ENCODE measurements at regions of chr6 and their contacts with region 1.

Region 1: GRCh38 chr6:129598244-129599187 is 111.5 kb downstream of the ARHGAP18 start:
- DNase-seq: peak; percentile 72
- ATAC-seq: peak; percentile 83
- H3K4me3 ChIP-seq: no peak overlapping the region
- H3K27ac ChIP-seq: peak overlapping the region; percentile 58; the same call in 1 of the 2 replicates
- H3K4me1 ChIP-seq: peaks cover 25 to 26% of the 10 kb centered on the region in 2 experiments
- H3K27me3 ChIP-seq: no peaks in the 10 kb centered on the region
- CTCF ChIP-seq: peak; percentile 52 to 83 (median 81)
- POLR2A ChIP-seq: no peak
- RAD21 ChIP-seq: peak; percentile 92

Region 2: DNA sequence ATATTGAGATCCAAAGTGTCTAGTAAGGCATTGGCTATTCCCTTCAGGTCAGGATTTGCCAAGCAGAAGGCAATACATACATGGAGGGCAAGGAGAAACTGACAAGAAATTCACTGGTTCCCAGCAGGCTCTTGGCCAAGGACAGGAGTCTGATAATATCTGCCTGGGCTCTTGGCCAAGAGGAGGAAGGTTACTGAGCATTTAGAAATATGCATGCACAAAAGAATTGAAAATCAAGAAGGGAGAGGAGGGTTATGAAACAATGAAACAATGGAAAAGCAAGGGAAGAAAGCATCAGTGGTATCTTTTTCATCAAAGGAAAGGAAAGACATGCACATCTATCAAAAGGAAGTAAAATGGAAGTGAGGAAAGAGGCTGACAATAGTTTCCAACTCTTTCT is 69.1 kb after region 1 on chr6:
- CTCF ChIA-PET with region 1: interaction called, 4 read pairs
- POLR2A ChIA-PET with region 1: interaction called, 4 read pairs
- RAD21 ChIA-PET with region 1: interaction called in 1 of 2 experiments, 3 read pairs
- intact Hi-C with region 1: loop called (anchors 2 kb)
- DNase-seq: no peak
- ATAC-seq: no peak
- H3K4me3 ChIP-seq: no peak overlapping the region
- H3K27ac ChIP-seq: peak overlapping the region; percentile 87
- H3K4me1 ChIP-seq: peaks cover 84 to 94% of the 10 kb centered on the region in 2 experiments
- H3K27me3 ChIP-seq: no peaks in the 10 kb centered on the region
- CTCF ChIP-seq: no peak
- POLR2A ChIP-seq: no peak
- RAD21 ChIP-seq: no peak

Region 3: DNA sequence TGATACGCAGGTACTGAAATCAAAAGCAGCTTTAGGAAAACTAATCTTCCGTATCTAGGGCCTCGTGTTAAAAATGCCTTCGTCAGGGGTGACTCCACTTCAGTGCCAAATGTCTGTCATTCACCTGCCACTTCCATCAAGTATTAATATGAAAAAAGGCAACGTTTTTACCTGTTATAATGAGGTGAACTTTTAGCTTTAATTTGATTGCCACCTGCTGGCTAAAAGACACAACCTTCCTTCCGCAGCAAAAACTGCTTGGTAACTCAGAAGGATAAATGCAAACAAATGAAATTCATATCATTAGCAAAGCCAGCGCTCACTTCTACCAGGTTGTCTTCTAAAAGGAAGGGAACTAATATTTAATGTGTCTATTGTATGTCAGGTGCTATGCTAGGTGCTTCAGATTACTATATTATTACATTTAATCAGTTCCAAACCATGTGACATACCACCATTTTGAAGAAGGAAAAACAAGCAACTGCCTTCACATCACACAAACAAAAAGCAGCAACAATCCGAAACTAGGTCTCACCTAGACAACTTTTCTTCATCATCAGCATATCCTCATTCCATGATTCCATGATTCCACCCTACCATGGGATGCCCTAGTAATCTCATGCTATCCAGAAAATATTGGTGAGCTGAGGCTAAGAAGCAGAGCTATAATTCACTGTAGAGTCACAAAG is 132.1 kb after region 1 on chr6:
- CTCF ChIA-PET with region 1: interaction called, 42 read pairs
- POLR2A ChIA-PET with region 1: no interaction called
- RAD21 ChIA-PET with region 1: interaction called, 7 to 11 read pairs
- intact Hi-C with region 1: loop called (anchors 1 kb)
- DNase-seq: no peak
- ATAC-seq: peak; percentile 62
- H3K4me3 ChIP-seq: no peak overlapping the region
- H3K27ac ChIP-seq: peak overlapping the region; percentile 52
- H3K4me1 ChIP-seq: peaks cover 27 to 38% of the 10 kb centered on the region in 2 experiments
- H3K27me3 ChIP-seq: no peaks in the 10 kb centered on the region
- CTCF ChIP-seq: peak; percentile 60 to 85 (median 71)
- POLR2A ChIP-seq: no peak
- RAD21 ChIP-seq: peak; percentile 96

Region 4: GRCh38 chr6:129774697-129775447 is 176.4 kb after region 1 on chr6:
- CTCF ChIA-PET with region 1: interaction called, 5 read pairs
- POLR2A ChIA-PET with region 1: no interaction called
- RAD21 ChIA-PET with region 1: no interaction called
- intact Hi-C with region 1: loop called (anchors 1 kb)
- DNase-seq: peak; percentile 68
- ATAC-seq: peak; percentile 93
- H3K4me3 ChIP-seq: peak overlapping the region; percentile 24 to 34
- H3K27ac ChIP-seq: peak overlapping the region; percentile 46
- H3K4me1 ChIP-seq: peaks cover 8 to 13% of the 10 kb centered on the region in 2 experiments; a peak in 3 of 4 replicates
- H3K27me3 ChIP-seq: no peaks in the 10 kb centered on the region
- CTCF ChIP-seq: peak; percentile 77 to 100 (median 98)
- POLR2A ChIP-seq: no peak
- RAD21 ChIP-seq: peak; percentile 85

Region 5: DNA sequence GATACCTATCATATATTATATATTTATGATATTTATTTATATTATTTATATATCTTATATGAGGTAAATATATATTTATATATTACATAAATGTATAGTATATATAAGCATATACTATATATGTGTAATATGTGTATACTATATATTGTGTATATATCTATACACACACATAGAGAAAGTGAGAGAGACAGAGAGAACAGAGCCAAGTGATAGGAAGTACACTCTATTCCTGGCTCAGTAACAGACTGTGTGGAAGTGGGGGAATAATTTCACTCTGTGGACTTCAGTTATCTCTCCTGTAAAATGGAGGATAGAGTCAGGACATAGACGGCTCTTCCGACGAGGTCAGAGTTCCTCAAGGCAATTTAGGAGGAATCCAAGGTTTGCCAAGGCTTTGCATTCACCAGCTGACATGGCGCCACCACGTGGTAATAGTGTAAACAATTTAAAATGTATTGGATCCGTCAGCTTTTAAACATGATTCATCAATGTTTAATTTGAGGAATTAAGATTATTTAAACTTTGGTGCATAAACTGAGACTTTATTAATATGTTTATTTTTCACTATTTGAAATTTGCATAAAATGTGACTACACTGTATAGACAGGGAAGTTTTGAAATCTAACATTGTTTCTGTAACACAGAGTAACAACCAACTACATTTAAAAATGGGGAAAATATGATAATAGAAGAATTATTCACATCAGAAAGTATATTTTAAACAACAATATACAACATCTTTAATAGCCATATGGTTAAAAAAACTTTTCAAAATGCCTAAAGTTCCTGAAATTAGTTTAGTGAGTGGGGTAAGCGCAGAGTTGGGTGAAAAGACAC is 338.0 kb after region 1 on chr6:
- CTCF ChIA-PET with region 1: no interaction called
- POLR2A ChIA-PET with region 1: no interaction called
- RAD21 ChIA-PET with region 1: no interaction called
- intact Hi-C with region 1: loop called (anchors 2 kb)
- DNase-seq: peak; percentile 81
- ATAC-seq: peak; percentile 99
- H3K4me3 ChIP-seq: no peak overlapping the region
- H3K27ac ChIP-seq: no peak overlapping the region
- H3K4me1 ChIP-seq: 0 out of 4 replicates have a peak, but pooled peaks cover 0 to 3% of the 10 kb centered on the region in 2 experiments
- H3K27me3 ChIP-seq: no peaks in the 10 kb centered on the region
- CTCF ChIP-seq: peak; percentile 30 to 75 (median 62); a peak in 4 of 6 replicates
- POLR2A ChIP-seq: no peak
- RAD21 ChIP-seq: peak; percentile 87

Region 6: GRCh38 chr6:130020907-130021629 is 422.6 kb after region 1 on chr6:
- CTCF ChIA-PET with region 1: interaction called, 16 read pairs
- POLR2A ChIA-PET with region 1: no interaction called
- RAD21 ChIA-PET with region 1: interaction called in 1 of 2 experiments, 3 read pairs
- intact Hi-C with region 1: loop called (anchors 1 kb)
- DNase-seq: peak; percentile 85
- ATAC-seq: peak; percentile 65
- H3K4me3 ChIP-seq: peak overlapping the region; percentile 64 to 72
- H3K27ac ChIP-seq: peak overlapping the region; percentile 93
- H3K4me1 ChIP-seq: peaks cover 12 to 13% of the 10 kb centered on the region in 2 experiments; a peak in 3 of 4 replicates
- H3K27me3 ChIP-seq: no peaks in the 10 kb centered on the region
- CTCF ChIP-seq: peak; percentile 61 to 83 (median 81); a peak in 5 of 6 replicates
- POLR2A ChIP-seq: no peak
- RAD21 ChIP-seq: peak; percentile 91

Region 7: DNA sequence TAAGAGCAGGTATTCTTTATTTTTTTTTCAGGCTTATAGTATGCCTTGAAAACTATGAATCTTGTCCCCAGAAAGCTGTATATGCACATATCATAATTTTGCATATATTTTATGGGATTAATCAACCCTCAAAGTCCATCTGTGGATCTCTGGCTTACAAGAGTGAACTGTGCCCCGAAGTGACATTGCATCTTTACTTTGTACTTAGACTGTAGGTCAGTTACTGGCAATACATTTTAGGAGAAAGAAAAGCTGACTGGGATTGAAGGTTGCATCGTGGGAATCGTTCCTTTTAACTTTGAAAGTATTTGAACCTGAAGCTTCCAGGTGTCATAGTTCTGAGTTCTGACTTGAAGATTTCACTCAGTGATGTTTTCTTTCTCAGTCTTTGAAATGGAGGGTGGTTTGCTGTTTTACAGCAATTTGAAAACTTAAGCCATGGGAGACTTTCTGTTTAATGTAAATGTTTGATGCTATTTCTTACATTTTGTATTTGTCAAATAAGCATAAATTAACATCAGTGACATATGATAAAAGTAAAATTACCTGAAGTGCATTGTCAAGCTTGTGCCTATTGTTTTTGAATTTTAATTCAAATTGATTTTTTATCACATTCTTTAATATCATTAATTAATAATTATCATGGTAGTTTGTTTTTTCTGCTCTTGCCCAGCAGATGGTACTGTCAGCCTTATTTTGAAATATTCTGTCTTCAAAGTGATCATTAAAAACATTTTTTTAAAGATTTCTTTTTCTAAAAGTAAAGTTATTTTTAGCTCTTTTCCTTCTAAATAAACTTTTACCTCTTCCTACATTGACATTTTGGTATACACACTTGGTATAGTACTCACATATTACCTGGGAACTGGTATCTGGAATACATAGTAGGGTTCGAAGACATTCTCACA is 448.8 kb after region 1 on chr6:
- CTCF ChIA-PET with region 1: no interaction called
- POLR2A ChIA-PET with region 1: no interaction called
- RAD21 ChIA-PET with region 1: no interaction called
- intact Hi-C with region 1: no loop called
- DNase-seq: no peak
- ATAC-seq: no peak
- H3K4me3 ChIP-seq: no peak overlapping the region
- H3K27ac ChIP-seq: no peak overlapping the region
- H3K4me1 ChIP-seq: no peaks in the 10 kb centered on the region
- H3K27me3 ChIP-seq: no peaks in the 10 kb centered on the region
- CTCF ChIP-seq: peak in 1 of 3 experiments; percentile 4; a peak in 1 of 6 replicates
- POLR2A ChIP-seq: no peak
- RAD21 ChIP-seq: peak; percentile 42

Region 8: DNA sequence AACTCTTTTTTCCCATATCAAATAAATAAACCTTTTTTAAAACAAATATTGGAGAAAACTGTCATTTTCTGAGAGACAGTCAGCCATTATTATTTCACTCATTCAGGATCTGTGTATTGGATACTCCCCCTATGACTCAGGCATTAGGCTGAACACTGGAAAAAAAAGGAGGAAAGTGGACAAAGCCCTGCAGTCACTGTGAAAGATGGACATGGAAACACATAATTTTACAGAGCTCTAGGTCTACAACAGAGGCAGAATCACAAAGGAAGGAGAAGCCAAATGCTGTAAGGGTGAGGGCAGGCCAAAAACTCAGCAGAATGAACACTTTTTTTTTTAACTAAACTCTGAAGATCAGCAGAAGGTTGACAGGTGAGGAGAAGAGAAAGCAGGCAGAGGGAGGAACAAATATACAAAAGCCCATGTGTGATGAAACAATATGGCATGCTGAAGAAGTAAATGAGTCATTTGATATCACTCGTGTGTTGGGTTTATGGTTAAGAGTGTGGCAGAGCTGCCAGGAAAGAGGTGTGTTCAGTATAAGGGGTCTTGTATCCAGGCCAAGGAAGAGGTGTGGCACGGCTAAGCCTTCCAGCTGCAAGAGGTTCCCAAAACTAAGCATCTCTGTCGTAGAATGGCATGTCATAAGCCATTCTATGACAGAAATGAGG is 1425.5 kb after region 1 on chr6:
- CTCF ChIA-PET with region 1: no interaction called
- POLR2A ChIA-PET with region 1: no interaction called
- RAD21 ChIA-PET with region 1: no interaction called
- intact Hi-C with region 1: no loop called
- DNase-seq: peak; percentile 3
- ATAC-seq: peak; percentile 40; the same call in 1 of the 2 replicates
- H3K4me3 ChIP-seq: no peak overlapping the region
- H3K27ac ChIP-seq: no peak overlapping the region
- H3K4me1 ChIP-seq: peaks cover 3 to 9% of the 10 kb centered on the region in 2 experiments; a peak in 3 of 4 replicates
- H3K27me3 ChIP-seq: no peaks in the 10 kb centered on the region
- CTCF ChIP-seq: no peak
- POLR2A ChIP-seq: no peak
- RAD21 ChIP-seq: no peak

Measured in HCT116 (cell line).